ENCODE measurements at regions of chr2 and their contacts with region 1.

Region 1: DNA sequence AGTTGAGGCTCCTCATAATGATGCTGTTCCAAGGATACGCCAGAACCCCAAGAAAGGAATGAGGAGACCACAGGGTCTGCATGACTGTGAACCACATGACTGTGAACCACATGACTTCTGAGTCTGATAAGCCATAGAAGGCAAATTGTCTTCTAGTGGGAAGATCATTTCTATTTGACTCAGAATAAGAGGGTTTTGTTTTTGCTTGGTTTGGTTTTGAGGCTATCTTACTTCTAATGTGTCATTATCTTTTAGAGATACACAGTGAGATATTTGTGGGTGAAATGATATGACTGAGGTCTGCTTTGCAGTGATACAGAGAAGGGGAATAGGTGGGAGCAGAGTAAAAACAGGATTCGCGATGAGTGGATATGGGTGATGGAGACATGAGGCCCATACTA is 28.9 kb upstream of the BCL2L11 start:
- DNase-seq: peak; percentile 15
- H3K4me3 Mint-ChIP-seq: no peak overlapping the region
- H3K27ac Mint-ChIP-seq: no peak overlapping the region
- H3K4me1 Mint-ChIP-seq: peaks cover 7% of the 10 kb centered on the region
- H3K27me3 Mint-ChIP-seq: peaks cover 42% of the 10 kb centered on the region

Region 2: GRCh38 chr2:111111101-111111755 is 19.4 kb after region 1 on chr2:
- CTCF ChIA-PET with region 1: interaction called, 4 read pairs
- intact Hi-C with region 1: loop called (anchors 1 kb)
- DNase-seq: no peak
- H3K4me3 Mint-ChIP-seq: no peak overlapping the region
- H3K27ac Mint-ChIP-seq: no peak overlapping the region
- H3K4me1 Mint-ChIP-seq: peaks cover 17% of the 10 kb centered on the region
- H3K27me3 Mint-ChIP-seq: peaks cover 58% of the 10 kb centered on the region